H1 (cell line): ENCODE measurements at regions of chr17 and their contacts with region 1.

Region 1: GRCh38 chr17:4565209-4566141 is 5.1 kb upstream of the GGT6 start:
- DNase-seq: no peak
- H3K4me3 ChIP-seq: no peak overlapping the region
- H3K27ac ChIP-seq: no peak overlapping the region
- H3K4me1 ChIP-seq: peaks cover 2 to 12% (median 7%) of the 10 kb centered on the region in 4 experiments; a peak in 5 of 7 replicates
- H3K27me3 ChIP-seq: no peaks in the 10 kb centered on the region; a peak in 1 of 7 replicates
- CTCF ChIP-seq: peak; percentile 61 to 88 (median 78)
- EP300 ChIP-seq: no peak
- POLR2A ChIP-seq: no peak
- RAD21 ChIP-seq: peak; percentile 44 to 67

Region 2: GRCh38 chr17:4365103-4365627 is 200.3 kb before region 1 on chr17:
- CTCF ChIA-PET with region 1: no interaction called
- POLR2A ChIA-PET with region 1: no interaction called
- DNase-seq: peak; percentile 83 to 86
- H3K4me3 ChIP-seq: peak overlapping the region; percentile 77 to 98 (median 82)
- H3K27ac ChIP-seq: peak overlapping the region; percentile 85; the same call in 1 of the 2 replicates
- H3K4me1 ChIP-seq: peaks cover 0 to 5% (median 2%) of the 10 kb centered on the region in 4 experiments; a peak in 2 of 7 replicates
- H3K27me3 ChIP-seq: no peaks in the 10 kb centered on the region
- CTCF ChIP-seq: no peak
- EP300 ChIP-seq: no peak
- POLR2A ChIP-seq: peak in 1 of 2 experiments; percentile 94; a peak in 2 of 3 replicates
- RAD21 ChIP-seq: no peak; a peak in 1 of 4 replicates

Region 3: GRCh38 chr17:4420692-4421131 is 144.8 kb before region 1 on chr17:
- CTCF ChIA-PET with region 1: interaction called, 12 read pairs
- POLR2A ChIA-PET with region 1: no interaction called
- DNase-seq: peak in 1 of 2 experiments; percentile 74
- H3K4me3 ChIP-seq: no peak overlapping the region
- H3K27ac ChIP-seq: no peak overlapping the region
- H3K4me1 ChIP-seq: no peaks in the 10 kb centered on the region
- H3K27me3 ChIP-seq: no peaks in the 10 kb centered on the region; a peak in 1 of 7 replicates
- CTCF ChIP-seq: peak; percentile 83 to 95 (median 86)
- EP300 ChIP-seq: no peak
- POLR2A ChIP-seq: no peak
- RAD21 ChIP-seq: peak; percentile 88 to 93

Region 4: DNA sequence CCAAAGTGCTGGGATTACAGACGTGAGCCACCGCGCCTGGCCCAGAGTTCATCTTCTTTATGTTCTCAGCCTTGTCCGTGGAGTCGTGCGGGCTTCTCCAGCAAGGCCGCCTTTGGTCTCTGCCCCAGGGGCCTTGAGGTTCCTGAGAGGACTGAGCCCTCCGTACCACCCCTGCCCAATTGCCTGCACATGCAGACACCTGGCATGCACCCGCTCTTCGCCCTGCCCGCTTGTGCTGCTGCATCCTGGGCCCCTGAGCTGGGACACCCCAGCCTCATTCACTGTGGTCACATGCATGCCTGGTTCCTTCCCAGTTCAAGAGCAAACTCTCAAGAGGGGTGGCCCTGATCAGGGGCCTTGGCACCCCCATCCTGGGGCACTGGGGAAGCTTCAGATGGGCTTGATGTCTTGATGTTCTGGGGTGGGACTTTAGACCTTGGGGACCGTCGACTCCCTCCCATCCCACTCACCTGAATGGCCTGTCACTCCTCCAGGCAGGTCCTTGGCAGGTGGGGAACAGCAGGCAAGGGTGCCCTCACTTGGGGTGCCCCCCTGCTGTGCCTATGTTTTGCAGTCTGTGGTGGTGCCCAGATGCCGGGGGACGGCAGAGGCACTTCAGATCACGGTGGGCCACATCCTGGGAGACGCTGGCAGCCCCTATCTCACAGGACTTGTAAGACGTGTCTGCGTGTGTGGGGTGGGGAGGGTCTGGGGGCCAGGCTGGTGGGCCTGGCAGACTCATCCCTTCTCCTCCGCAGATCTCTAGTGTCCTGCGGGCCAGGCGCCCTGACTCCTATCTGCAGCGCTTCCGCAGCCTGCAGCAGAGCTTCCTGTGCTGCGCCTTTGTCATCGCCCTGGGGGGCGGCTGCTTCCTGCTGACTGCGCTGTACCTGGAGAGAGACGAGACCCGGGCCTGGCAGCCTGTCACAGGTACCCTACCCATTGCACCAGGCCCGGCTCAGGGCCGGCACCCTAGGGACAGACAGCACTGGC is 79.5 kb before region 1 on chr17:
- CTCF ChIA-PET with region 1: no interaction called
- POLR2A ChIA-PET with region 1: no interaction called
- DNase-seq: no peak
- H3K4me3 ChIP-seq: no peak overlapping the region
- H3K27ac ChIP-seq: no peak overlapping the region
- H3K4me1 ChIP-seq: peaks cover 0 to 4% (median 2%) of the 10 kb centered on the region in 4 experiments; a peak in 4 of 7 replicates
- H3K27me3 ChIP-seq: no peaks in the 10 kb centered on the region
- CTCF ChIP-seq: no peak
- EP300 ChIP-seq: no peak
- POLR2A ChIP-seq: no peak
- RAD21 ChIP-seq: no peak

Region 5: GRCh38 chr17:4583782-4584100 is 18.3 kb after region 1 on chr17:
- CTCF ChIA-PET with region 1: interaction called, 114 read pairs
- POLR2A ChIA-PET with region 1: interaction called, 5 read pairs
- DNase-seq: no peak
- H3K4me3 ChIP-seq: peak overlapping the region; percentile 45 to 69 (median 58)
- H3K27ac ChIP-seq: no peak overlapping the region
- H3K4me1 ChIP-seq: peaks cover 0 to 18% (median 13%) of the 10 kb centered on the region in 4 experiments; a peak in 6 of 7 replicates
- H3K27me3 ChIP-seq: peaks cover 8 to 45% (median 38%) of the 10 kb centered on the region in 4 experiments
- CTCF ChIP-seq: peak; percentile 38 to 61 (median 48); a peak in 3 of 4 replicates
- EP300 ChIP-seq: no peak
- POLR2A ChIP-seq: no peak
- RAD21 ChIP-seq: peak in 1 of 2 experiments; percentile 10; a peak in 2 of 4 replicates

Region 6: GRCh38 chr17:4607773-4608187 is 42.3 kb after region 1 on chr17:
- CTCF ChIA-PET with region 1: interaction called, 77 read pairs
- POLR2A ChIA-PET with region 1: no interaction called
- DNase-seq: no peak
- H3K4me3 ChIP-seq: no peak overlapping the region
- H3K27ac ChIP-seq: no peak overlapping the region
- H3K4me1 ChIP-seq: peaks cover 0 to 10% (median 2%) of the 10 kb centered on the region in 4 experiments; a peak in 3 of 7 replicates
- H3K27me3 ChIP-seq: no peaks in the 10 kb centered on the region; a peak in 1 of 7 replicates
- CTCF ChIP-seq: no peak
- EP300 ChIP-seq: no peak
- POLR2A ChIP-seq: no peak
- RAD21 ChIP-seq: no peak

Region 7: GRCh38 chr17:4625181-4625617 is 59.7 kb after region 1 on chr17:
- CTCF ChIA-PET with region 1: interaction called, 170 read pairs
- POLR2A ChIA-PET with region 1: interaction called, 4 read pairs
- DNase-seq: no peak
- H3K4me3 ChIP-seq: no peak overlapping the region
- H3K27ac ChIP-seq: no peak overlapping the region
- H3K4me1 ChIP-seq: no peaks in the 10 kb centered on the region; a peak in 1 of 7 replicates
- H3K27me3 ChIP-seq: 0 out of 7 replicates have a peak, but pooled peaks cover 0 to 2% (median 0%) of the 10 kb centered on the region in 4 experiments
- CTCF ChIP-seq: no peak
- EP300 ChIP-seq: no peak
- POLR2A ChIP-seq: no peak
- RAD21 ChIP-seq: no peak

Region 8: DNA sequence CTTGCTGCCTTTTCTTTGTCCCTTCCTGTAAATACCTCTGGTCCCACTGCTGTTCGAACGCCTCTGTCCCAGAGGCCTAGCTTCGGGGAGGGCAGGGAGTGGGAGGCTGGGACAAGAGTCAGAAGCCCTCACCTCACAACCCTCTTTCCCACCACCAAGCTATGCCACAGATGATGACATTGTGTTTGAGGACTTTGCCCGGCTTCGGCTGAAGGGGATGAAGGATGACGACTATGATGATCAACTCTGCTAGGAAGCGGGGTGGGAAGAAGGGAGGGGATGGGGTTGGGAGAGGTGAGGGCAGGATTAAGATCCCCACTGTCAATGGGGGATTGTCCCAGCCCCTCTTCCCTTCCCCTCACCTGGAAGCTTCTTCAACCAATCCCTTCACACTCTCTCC is 155.3 kb after region 1 on chr17:
- CTCF ChIA-PET with region 1: no interaction called
- POLR2A ChIA-PET with region 1: no interaction called
- DNase-seq: no peak
- H3K4me3 ChIP-seq: no peak overlapping the region
- H3K27ac ChIP-seq: no peak overlapping the region
- H3K4me1 ChIP-seq: no peaks in the 10 kb centered on the region
- H3K27me3 ChIP-seq: no peaks in the 10 kb centered on the region
- CTCF ChIP-seq: no peak
- EP300 ChIP-seq: no peak
- POLR2A ChIP-seq: no peak
- RAD21 ChIP-seq: no peak